Activated CD4-positive, alpha-beta T cell treated with anti-CD3 and anti-CD28 coated beads, Interleukin-2, amount 10 ng/mL, durations not matched to agents 24 days and 14 days (primary cell): ENCODE measurements at regions of chr2 and their contacts with region 1.

Region 1: GRCh38 chr2:68031542-68032160 is 31.2 kb downstream of the C1D start:
- DNase-seq: no peak
- H3K4me3 Mint-ChIP-seq: no peak overlapping the region
- H3K27ac Mint-ChIP-seq: no peak overlapping the region
- H3K4me1 Mint-ChIP-seq: no peaks in the 10 kb centered on the region
- H3K27me3 Mint-ChIP-seq: peaks cover 15% of the 10 kb centered on the region

Region 2: GRCh38 chr2:66429071-66429477 is 1602.6 kb before region 1 on chr2:
- intact Hi-C with region 1: loop called (anchors 5 kb)
- DNase-seq: peak; percentile 64
- H3K4me3 Mint-ChIP-seq: no peak overlapping the region
- H3K27ac Mint-ChIP-seq: no peak overlapping the region
- H3K4me1 Mint-ChIP-seq: peaks cover 5% of the 10 kb centered on the region
- H3K27me3 Mint-ChIP-seq: peaks cover 73% of the 10 kb centered on the region

Region 3: GRCh38 chr2:68045342-68045741 is 13.7 kb after region 1 on chr2:
- intact Hi-C with region 1: no loop called
- DNase-seq: no peak
- H3K4me3 Mint-ChIP-seq: no peak overlapping the region
- H3K27ac Mint-ChIP-seq: no peak overlapping the region
- H3K4me1 Mint-ChIP-seq: no peaks in the 10 kb centered on the region
- H3K27me3 Mint-ChIP-seq: no peaks in the 10 kb centered on the region